PC-3 (cell line): ENCODE measurements at regions of chr1 and their contacts with region 1.

Region 1: GRCh38 chr1:201154389-201155165 is at the start of gene TMEM9:
- DNase-seq: peak; percentile 100
- ATAC-seq: peak; percentile 95
- H3K4me3 ChIP-seq: peak within 1 kb of the TSS; percentile 72
- H3K27ac ChIP-seq: peak within 1 kb of the TSS; percentile 1
- H3K4me1 ChIP-seq: peaks cover 20% of the 10 kb centered on the region
- H3K27me3 ChIP-seq: no peaks in the 10 kb centered on the region
- CTCF ChIP-seq: no peak
- total RNA-seq, gene TMEM9: 428 and 435 TPM in 2 replicates

Region 2: DNA sequence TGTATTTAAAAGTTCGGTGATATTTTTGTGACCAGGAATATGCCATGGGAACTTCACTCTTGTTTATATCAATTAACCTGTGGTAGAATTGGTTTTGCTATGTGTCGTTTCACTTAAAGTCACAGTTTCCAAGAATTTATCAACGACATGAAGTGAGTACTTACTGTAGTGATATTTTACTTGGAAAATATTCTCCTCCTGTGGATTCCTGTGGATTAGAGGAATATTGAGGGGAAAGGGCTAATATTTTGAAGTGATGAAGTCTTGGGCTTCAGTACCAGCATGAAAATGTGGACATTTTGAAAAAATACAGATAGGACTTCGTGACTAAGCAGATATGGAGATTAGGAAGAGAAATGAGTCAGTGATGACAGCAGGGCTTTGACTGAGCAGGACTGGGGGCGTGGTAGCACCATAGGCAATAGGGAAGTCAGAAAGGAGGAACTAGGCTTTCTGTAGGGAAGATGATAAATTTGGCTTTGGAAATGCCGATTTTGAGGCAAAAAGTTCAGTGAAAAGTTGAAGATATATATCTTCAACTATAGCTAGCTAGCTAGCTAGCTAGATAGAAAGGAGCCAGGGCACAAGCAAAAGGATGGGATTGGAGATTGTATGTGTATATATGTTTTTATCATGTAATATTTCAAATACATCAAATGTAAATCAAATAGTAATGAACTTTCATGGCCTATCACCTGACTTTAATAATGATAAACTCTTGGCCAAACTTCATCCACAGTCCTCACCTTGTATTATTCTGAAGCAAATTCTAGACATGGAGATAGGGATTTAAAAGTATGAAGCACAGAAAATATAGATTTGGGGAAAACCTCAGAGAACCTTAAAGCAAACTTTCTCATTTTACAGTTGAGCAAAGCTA is 514.5 kb before region 1 on chr1:
- CTCF ChIA-PET with region 1: no interaction called
- POLR2A ChIA-PET with region 1: no interaction called
- intact Hi-C with region 1: no loop called
- DNase-seq: peak; percentile 97
- ATAC-seq: peak; percentile 100
- H3K4me3 ChIP-seq: no peak overlapping the region
- H3K27ac ChIP-seq: peak overlapping the region; percentile 81
- H3K4me1 ChIP-seq: peaks cover 20% of the 10 kb centered on the region
- H3K27me3 ChIP-seq: no peaks in the 10 kb centered on the region
- CTCF ChIP-seq: no peak

Region 3: GRCh38 chr1:200738740-200739498 is 415.7 kb before region 1 on chr1 and contains the start of gene CAMSAP2:
- CTCF ChIA-PET with region 1: no interaction called
- POLR2A ChIA-PET with region 1: no interaction called
- intact Hi-C with region 1: no loop called
- DNase-seq: peak; percentile 96
- ATAC-seq: peak; percentile 75
- H3K4me3 ChIP-seq: peak within 1 kb of the TSS; percentile 89
- H3K27ac ChIP-seq: peak within 1 kb of the TSS; percentile 90
- H3K4me1 ChIP-seq: peaks cover 39% of the 10 kb centered on the region
- H3K27me3 ChIP-seq: no peaks in the 10 kb centered on the region
- CTCF ChIP-seq: no peak
- total RNA-seq, gene CAMSAP2: 28.6 and 29.5 TPM in 2 replicates

Region 4: DNA sequence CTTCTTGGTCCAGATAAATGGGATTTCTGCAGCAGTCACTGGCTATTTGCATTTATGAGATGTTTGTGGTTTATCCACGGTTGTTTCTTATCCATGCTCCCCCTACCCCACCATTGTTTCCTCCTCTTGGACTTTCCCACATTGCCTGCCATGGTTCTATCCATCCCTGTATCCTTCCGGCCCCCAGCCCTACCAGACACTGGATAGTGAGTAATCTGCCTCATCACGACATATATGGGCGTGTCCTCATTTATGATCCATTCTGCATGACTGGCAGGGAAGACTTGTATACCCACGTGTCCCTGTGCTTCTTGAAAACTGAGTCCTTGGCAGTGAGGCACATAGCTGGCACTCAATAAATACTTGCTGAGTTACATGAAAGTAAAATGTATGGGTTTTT is 82.4 kb before region 1 on chr1:
- CTCF ChIA-PET with region 1: no interaction called
- POLR2A ChIA-PET with region 1: no interaction called
- intact Hi-C with region 1: no loop called
- DNase-seq: peak; percentile 97
- ATAC-seq: peak; percentile 91
- H3K4me3 ChIP-seq: no peak overlapping the region
- H3K27ac ChIP-seq: no peak overlapping the region
- H3K4me1 ChIP-seq: peaks cover 9% of the 10 kb centered on the region
- H3K27me3 ChIP-seq: peaks cover 45% of the 10 kb centered on the region
- CTCF ChIP-seq: no peak

Region 5: DNA sequence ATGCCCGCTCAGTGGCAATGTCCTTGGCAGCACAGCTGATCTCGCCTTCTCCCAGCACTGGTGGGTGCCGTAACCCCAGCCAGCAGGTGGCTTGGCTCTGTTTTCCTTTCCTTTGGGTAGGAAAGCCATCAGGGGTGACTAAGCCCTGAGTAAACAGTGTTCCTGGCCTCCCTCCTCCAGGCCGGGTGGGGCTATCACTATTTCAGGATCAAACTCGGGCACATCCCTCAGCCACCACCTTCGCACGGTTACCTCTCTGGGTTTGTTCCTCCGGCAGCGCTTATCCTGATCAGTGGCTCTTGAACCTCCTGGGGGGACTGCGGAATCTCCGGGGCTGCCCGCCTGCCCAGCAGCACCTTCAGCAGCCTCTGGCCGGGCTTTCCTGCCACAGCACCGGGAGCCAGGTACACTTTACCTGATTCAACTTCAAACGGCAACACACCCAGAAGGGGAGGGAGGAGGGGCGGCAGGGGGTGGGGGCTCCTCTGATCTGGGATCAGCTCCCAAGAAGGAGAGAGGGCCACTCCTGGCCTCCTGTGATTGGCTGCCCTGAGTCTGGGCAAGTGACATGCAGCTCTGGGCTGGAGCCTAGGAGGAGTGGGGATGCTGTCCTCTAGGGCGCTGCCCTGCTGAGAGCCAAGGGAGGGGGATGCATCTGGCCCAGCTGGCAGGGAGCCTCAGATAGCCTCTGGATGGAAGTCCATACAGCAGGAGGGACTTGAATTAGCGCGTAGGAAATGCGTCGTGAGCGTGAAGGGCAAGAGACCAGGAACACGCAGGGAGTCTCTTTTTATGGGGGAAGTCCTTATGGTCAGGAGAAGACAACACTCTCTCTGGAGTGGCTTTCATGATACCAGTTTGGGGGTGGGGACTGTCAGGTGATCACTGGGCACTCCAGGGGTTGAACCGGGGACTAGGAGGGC is 27.5 kb before region 1 on chr1 and contains the start of gene ASCL5:
- CTCF ChIA-PET with region 1: no interaction called
- POLR2A ChIA-PET with region 1: interaction called, 7 read pairs
- intact Hi-C with region 1: loop called (anchors 1 kb)
- DNase-seq: peak; percentile 100
- ATAC-seq: peak; percentile 90
- H3K4me3 ChIP-seq: peak within 1 kb of the TSS; percentile 59
- H3K27ac ChIP-seq: peak within 1 kb of the TSS; percentile 35
- H3K4me1 ChIP-seq: peaks cover 38% of the 10 kb centered on the region
- H3K27me3 ChIP-seq: no peaks in the 10 kb centered on the region
- CTCF ChIP-seq: peak; percentile 89
- total RNA-seq, gene ASCL5: 2.4 and 3.1 TPM in 2 replicates

Region 6: DNA sequence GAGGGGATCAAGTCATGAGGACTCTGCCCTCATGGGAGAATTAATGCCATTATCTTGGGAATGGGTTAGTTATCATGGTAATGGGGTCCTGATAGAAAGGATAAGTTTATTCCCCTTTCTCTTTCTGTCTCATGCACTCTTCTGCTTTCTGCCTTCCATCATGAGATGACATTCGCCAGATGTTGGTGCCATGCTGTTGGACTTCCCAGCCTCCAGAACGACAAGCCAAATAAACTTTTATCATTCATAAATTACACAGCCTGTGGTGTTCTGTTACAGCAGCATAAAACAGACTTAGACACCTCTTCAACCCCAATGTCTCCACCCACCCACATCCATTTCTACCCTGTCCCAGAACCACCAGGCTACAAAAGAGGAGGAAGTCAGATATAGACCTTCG is 24.1 kb after region 1 on chr1:
- CTCF ChIA-PET with region 1: no interaction called
- POLR2A ChIA-PET with region 1: no interaction called
- intact Hi-C with region 1: no loop called
- DNase-seq: no peak
- ATAC-seq: no peak
- H3K4me3 ChIP-seq: no peak overlapping the region
- H3K27ac ChIP-seq: no peak overlapping the region
- H3K4me1 ChIP-seq: peaks cover 13% of the 10 kb centered on the region
- H3K27me3 ChIP-seq: peaks cover 7% of the 10 kb centered on the region; the same call in 1 of the 2 replicates
- CTCF ChIP-seq: no peak

Region 7: DNA sequence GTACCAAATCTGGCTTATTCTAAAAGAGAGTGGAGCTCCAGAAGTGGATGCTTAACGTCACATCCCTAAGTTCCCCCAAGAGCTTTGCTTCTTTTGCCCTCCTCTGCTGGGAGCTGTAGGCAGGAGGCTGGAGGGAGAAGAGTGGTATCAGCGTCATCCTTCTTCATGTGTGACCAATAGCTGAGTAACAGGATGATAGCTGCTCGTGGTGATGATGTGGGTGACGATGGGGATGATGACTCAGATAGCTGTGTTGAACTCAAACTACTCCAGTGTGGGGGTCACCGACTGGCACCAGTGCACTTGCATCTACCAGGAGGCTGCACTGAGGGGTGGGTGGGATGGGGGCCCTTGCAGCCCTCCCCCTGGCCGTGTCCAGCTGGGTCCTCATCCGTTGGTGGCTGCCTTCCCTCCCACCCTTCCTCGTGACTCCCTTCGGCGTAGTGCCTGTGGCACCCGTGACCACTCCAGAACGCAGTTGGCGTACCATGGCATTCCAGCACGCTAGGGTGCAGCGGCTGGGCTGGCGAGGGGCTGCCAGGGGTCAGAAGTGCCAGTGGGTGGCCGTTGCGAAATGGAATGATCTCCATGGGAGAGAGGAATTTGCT is 37.2 kb after region 1 on chr1:
- CTCF ChIA-PET with region 1: no interaction called
- POLR2A ChIA-PET with region 1: interaction called, 14 read pairs
- intact Hi-C with region 1: loop called (anchors 1 kb)
- DNase-seq: peak; percentile 99
- ATAC-seq: peak; percentile 98
- H3K4me3 ChIP-seq: no peak overlapping the region
- H3K27ac ChIP-seq: peak overlapping the region; percentile 1; the same call in 1 of the 2 replicates
- H3K4me1 ChIP-seq: peaks cover 17% of the 10 kb centered on the region
- H3K27me3 ChIP-seq: no peaks in the 10 kb centered on the region
- CTCF ChIP-seq: no peak

Region 8: DNA sequence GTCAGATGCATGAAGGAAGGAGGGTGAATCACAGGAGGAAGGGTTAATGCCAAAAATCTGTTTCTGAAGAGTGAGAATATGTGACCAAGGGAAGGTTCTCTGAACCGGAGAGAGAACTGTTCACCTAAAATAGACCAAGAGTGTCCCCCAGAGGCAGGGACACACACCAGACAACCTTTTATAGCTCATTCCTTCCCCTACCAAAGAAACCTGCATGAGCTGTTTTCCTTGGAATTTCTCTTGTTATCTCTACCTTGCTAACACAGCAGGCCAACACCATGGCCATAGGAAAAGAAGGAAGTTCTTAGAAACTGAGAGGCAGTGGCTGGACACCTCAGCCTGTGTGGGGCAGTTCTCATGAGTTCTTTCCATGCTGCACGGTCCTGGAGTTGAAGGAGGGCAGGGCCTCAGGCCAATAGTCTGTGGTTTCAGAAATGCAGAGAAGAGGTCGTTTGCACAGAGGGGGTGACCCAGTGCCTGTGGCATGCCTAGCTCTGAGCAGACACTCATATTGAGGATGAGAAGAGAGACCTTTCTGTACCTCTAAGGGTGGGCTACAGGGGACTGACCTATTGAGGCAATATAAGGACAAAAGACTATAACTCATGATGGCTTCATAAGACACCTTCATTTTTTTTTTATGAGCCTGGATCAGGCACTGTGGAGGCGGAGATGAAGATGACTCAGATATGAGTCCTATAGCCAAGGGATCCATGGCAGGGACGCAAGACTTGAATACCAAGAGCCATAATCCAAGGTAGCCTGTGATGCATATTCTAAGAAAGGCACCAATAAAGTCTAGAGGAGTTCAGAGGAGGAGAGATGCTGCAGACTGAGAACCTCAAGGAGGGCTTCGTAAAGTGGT is 75.4 kb after region 1 on chr1:
- CTCF ChIA-PET with region 1: interaction called, 6 read pairs
- POLR2A ChIA-PET with region 1: no interaction called
- intact Hi-C with region 1: loop called (anchors 1 kb)
- DNase-seq: peak; percentile 99
- ATAC-seq: peak; percentile 92
- H3K4me3 ChIP-seq: peak overlapping the region; percentile 3; the same call in 1 of the 2 replicates
- H3K27ac ChIP-seq: peak overlapping the region; percentile 54
- H3K4me1 ChIP-seq: peaks cover 21% of the 10 kb centered on the region
- H3K27me3 ChIP-seq: no peaks in the 10 kb centered on the region
- CTCF ChIP-seq: peak; percentile 91